Right ventricle myocardium superior (tissue), 1 donor: ENCODE measurements at regions of chr17 and their contacts with region 1.

Region 1: GRCh38 chr17:65561394-65562205 is at the start of gene AXIN2:
- DNase-seq: peak; percentile 95
- ATAC-seq: peak; percentile 85
- total RNA-seq, gene AXIN2: 20.7 TPM

Region 2: GRCh38 chr17:66177048-66177447 is 615.4 kb after region 1 on chr17:
- intact Hi-C with region 1: loop called (anchors 10 kb)
- DNase-seq: no peak
- ATAC-seq: no peak